ENCODE measurements at regions of chr2 and their contacts with region 1.

Region 1: DNA sequence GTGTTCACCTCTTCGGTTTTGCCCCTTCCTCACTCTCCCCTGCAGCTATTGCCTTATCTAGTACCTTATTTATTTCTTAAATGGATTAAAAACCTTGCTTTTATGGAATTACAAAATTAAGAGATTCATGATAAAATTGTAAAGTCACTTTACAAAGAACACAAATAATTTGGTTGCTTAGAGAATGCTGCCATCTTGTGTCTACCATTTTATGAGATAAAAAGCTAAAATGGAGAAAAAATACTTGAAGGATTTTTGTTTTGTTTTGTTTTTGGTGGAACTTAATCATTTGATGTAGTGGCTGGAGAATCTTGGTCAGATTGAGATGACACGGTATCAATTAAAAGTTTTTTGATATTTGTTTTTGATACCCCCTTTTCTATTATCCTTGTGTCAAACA is 69.6 kb downstream of the R3HDM1 start:
- DNase-seq: no peak
- H3K4me3 Mint-ChIP-seq: no peak overlapping the region
- H3K27ac Mint-ChIP-seq: no peak overlapping the region
- H3K4me1 Mint-ChIP-seq: no peaks in the 10 kb centered on the region
- H3K27me3 Mint-ChIP-seq: no peaks in the 10 kb centered on the region

Region 2: DNA sequence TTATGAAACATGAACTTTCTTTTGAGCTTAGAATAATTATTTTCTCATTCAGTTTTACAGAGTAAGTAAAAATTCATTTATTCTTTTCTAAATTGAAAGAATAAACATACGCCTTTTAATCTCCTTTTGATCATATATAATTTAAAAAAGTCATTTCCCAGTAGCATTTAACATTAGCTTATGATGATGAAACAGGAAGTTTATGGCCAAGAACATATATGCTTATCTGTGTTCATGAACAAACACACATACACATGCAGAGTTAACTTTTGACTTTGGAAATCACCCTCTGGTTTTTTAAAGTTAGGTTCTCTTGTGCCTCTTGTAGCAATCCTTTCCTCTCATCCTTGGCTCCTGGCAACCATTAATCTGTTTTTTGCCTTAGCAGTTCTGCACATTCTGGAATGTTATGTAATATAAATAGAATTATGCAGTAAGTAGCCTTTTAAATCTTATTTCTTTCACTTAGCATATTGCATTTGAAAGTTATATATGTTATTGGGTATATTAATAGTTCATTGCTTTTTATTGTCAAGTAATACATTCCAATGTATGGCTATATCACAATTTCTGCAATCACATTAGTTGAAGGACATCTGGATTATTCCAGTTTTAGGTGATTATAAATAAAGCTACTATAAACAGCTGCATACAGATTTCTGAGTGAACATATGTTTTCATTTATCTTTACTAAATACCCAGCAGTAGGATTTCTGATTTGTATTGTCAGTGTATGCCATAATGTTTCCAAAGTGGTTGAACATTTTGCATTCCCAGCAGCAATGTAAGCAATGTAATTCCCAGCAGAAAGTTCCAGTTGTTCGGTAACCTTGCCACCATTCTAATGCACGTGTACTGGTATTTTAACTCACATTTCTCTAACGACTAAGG is 280.2 kb before region 1 on chr2:
- CTCF ChIA-PET with region 1: no interaction called
- POLR2A ChIA-PET with region 1: no interaction called
- intact Hi-C with region 1: no loop called
- DNase-seq: no peak
- H3K4me3 Mint-ChIP-seq: no peak overlapping the region
- H3K27ac Mint-ChIP-seq: no peak overlapping the region
- H3K4me1 Mint-ChIP-seq: no peaks in the 10 kb centered on the region
- H3K27me3 Mint-ChIP-seq: no peaks in the 10 kb centered on the region

Region 3: GRCh38 chr2:135473567-135473966 is 127.3 kb before region 1 on chr2:
- CTCF ChIA-PET with region 1: interaction called, 6 read pairs
- POLR2A ChIA-PET with region 1: no interaction called
- intact Hi-C with region 1: loop called (anchors 1 kb)
- DNase-seq: peak; percentile 42
- H3K4me3 Mint-ChIP-seq: no peak overlapping the region
- H3K27ac Mint-ChIP-seq: no peak overlapping the region
- H3K4me1 Mint-ChIP-seq: no peaks in the 10 kb centered on the region
- H3K27me3 Mint-ChIP-seq: no peaks in the 10 kb centered on the region